T-cell (primary cell): ENCODE measurements at regions of chr17 and their contacts with region 1.

Region 1: GRCh38 chr17:65100316-65101140 is 36.6 kb upstream of the RGS9 start:
- DNase-seq: peak; percentile 59 to 91 (median 74)
- ATAC-seq: peak; percentile 91 to 95 (median 92)
- H3K4me3 ChIP-seq: peak overlapping the region; percentile 46 to 60
- H3K4me3 Mint-ChIP-seq: peak overlapping the region; percentile 74 to 87 (median 78)
- H3K27ac ChIP-seq: peak overlapping the region; percentile 71
- H3K27ac Mint-ChIP-seq: peak overlapping the region; percentile 87 to 93
- H3K4me1 ChIP-seq: peaks cover 3 to 17% of the 10 kb centered on the region in 2 experiments
- H3K4me1 Mint-ChIP-seq: peaks cover 15 to 32% (median 22%) of the 10 kb centered on the region in 3 donors
- H3K27me3 ChIP-seq: peaks cover 0 to 4% of the 10 kb centered on the region in 2 experiments
- H3K27me3 Mint-ChIP-seq: no peaks in the 10 kb centered on the region

Region 2: GRCh38 chr17:64920026-64920418 is 180.5 kb before region 1 on chr17:
- CTCF ChIA-PET with region 1: interaction called, 5 to 14 read pairs
- POLR2A ChIA-PET with region 1: interaction called in 1 of 2 experiments, 4 read pairs
- DNase-seq: peak in 1 of 35 experiments; percentile 14
- ATAC-seq: peak in 1 of 4 experiments; percentile 4
- H3K4me3 ChIP-seq: peak overlapping the region; percentile 47 to 67
- H3K4me3 Mint-ChIP-seq: peak overlapping the region; percentile 84 to 88 (median 86)
- H3K27ac ChIP-seq: peak overlapping the region; percentile 81
- H3K27ac Mint-ChIP-seq: peak overlapping the region; percentile 87
- H3K4me1 ChIP-seq: peaks cover 0 to 5% of the 10 kb centered on the region in 2 experiments
- H3K4me1 Mint-ChIP-seq: peaks cover 7 to 9% (median 7%) of the 10 kb centered on the region in 3 donors
- H3K27me3 ChIP-seq: no peaks in the 10 kb centered on the region
- H3K27me3 Mint-ChIP-seq: no peaks in the 10 kb centered on the region

Region 3: DNA sequence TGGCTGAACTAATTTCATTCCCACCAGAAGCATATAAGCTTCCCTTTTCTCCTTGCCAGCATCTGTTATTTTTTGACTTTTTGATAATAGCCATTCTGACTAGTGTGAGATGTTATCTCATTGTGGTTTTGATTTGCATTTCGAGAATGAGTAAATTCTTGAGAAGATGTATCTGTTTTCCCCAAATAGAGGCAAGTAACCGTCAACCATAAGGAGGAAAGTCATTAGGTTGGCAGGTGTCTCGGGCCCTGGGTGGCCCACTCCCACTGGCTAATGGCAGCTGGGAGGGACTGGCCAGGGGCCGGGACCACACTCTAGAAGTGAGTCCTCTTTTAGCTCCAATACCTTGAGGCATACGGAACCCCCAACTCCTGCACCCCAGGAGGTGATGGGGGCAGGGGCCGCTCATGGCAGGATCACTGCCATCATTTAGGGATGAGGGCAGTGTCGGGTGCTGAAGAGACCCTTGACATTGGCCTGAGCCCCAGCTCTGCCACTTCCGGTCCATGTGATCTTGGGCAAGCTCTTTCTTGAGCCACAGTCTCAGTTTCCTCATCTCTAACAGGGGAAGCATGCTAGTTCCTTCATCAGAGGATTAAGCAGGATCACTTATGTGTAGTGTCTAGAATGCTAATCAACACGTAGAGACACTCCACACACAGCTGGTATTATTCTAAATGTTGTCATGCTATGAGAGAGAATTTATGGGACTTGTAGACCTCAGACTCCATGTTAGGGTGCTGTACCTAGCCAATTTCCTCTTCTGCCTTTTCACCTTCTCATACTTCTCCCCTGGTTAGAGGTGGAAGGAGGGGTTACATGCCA is 80.9 kb after region 1 on chr17:
- CTCF ChIA-PET with region 1: no interaction called
- POLR2A ChIA-PET with region 1: no interaction called
- DNase-seq: peak in 1 of 35 experiments; percentile 21
- ATAC-seq: peak in 1 of 4 experiments; percentile 15
- H3K4me3 ChIP-seq: no peak overlapping the region
- H3K4me3 Mint-ChIP-seq: peak overlapping the region in 1 of 3 donors; percentile 65
- H3K27ac ChIP-seq: peak overlapping the region; percentile 39
- H3K27ac Mint-ChIP-seq: peak overlapping the region; percentile 68 to 90
- H3K4me1 ChIP-seq: peaks cover 0 to 55% of the 10 kb centered on the region in 2 experiments
- H3K4me1 Mint-ChIP-seq: peaks cover 47 to 71% (median 48%) of the 10 kb centered on the region in 3 donors
- H3K27me3 ChIP-seq: peaks cover 0 to 3% of the 10 kb centered on the region in 2 experiments
- H3K27me3 Mint-ChIP-seq: peaks cover 0 to 7% of the 10 kb centered on the region in 2 donors

Region 4: GRCh38 chr17:65438708-65439294 is 338.3 kb after region 1 on chr17:
- CTCF ChIA-PET with region 1: no interaction called
- POLR2A ChIA-PET with region 1: no interaction called
- DNase-seq: no peak
- ATAC-seq: no peak
- H3K4me3 ChIP-seq: no peak overlapping the region
- H3K4me3 Mint-ChIP-seq: no peak overlapping the region
- H3K27ac ChIP-seq: no peak overlapping the region
- H3K27ac Mint-ChIP-seq: no peak overlapping the region
- H3K4me1 ChIP-seq: peaks cover 0 to 4% of the 10 kb centered on the region in 2 experiments
- H3K4me1 Mint-ChIP-seq: peaks cover 7 to 11% (median 8%) of the 10 kb centered on the region in 3 donors
- H3K27me3 ChIP-seq: peaks cover 0 to 23% of the 10 kb centered on the region in 2 experiments
- H3K27me3 Mint-ChIP-seq: peaks cover 31 to 40% of the 10 kb centered on the region in 2 donors